ENCODE measurements at regions of chr6 and their contacts with region 1.

Region 1: DNA sequence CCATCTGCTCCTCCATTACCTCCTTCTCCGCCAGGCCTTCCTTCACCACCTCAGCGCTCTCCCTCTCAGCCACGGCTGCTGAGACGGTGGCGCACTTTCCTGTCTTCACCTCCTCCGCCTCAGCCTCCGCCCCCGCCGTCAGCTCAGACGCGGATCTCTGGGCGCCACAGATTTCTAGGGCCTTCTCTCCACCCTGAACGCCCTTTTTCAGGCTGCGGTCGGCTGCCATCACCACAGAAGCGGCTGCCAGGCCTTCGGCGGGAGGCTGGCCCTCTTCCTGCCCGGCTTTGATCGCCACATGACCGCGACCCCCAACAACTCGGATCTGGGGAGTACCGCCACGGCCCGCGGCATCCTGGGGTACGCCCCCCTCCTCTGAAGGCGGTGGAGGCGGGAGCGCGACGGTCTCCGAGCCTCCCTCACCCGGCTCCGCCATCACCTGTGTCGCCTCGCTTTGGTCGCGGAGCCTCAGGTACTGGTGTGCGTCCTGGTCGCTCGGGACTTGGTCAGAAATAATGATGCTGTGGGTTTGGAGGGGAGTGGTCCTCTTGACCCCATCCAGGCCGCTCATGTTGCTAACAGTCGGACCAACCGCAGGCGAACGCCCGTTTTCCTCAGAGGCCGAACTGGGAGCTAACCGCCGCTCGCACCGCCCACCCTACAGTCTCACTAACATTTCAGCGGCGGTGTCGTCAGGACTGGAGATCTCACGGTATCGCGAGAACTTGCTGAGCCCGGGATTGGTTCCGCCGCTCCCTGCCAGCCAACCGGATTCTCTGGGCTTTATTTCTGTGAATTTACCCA is at the start of gene TSPYL1:
- DNase-seq: peak; percentile 97
- H3K4me3 ChIP-seq: peak within 1 kb of the TSS; percentile 88
- H3K27ac ChIP-seq: peak within 1 kb of the TSS; percentile 99
- H3K4me1 ChIP-seq: peaks cover 7% of the 10 kb centered on the region
- H3K27me3 ChIP-seq: no peaks in the 10 kb centered on the region
- CTCF ChIP-seq: no peak
- total RNA-seq, gene TSPYL1: 82.9 to 94.3 TPM

Region 2: DNA sequence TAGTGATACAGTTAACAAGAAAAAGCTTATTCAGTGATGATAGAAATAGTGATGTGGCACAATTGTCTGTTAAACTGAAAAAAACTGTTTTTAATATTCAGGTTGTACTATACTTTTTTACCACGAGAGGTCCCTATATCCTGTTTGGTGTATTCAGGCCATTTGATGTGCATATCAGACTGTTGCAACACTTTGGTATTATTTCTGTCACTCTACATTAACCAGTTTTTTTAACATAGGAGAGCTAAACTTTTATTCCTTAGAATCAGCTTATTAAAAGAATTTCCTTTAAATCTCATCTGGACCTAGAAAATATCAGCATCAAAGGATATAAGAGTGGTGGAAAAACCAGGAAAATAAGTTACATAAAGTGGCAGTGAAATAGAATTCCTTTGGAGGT is 62.4 kb before region 1 on chr6:
- intact Hi-C with region 1: no loop called
- DNase-seq: no peak
- H3K4me3 ChIP-seq: no peak overlapping the region
- H3K27ac ChIP-seq: no peak overlapping the region
- H3K4me1 ChIP-seq: no peaks in the 10 kb centered on the region
- H3K27me3 ChIP-seq: no peaks in the 10 kb centered on the region
- CTCF ChIP-seq: peak; percentile 34

Region 3: GRCh38 chr6:116371120-116371917 is 91.9 kb after region 1 on chr6:
- intact Hi-C with region 1: loop called (anchors 10 kb)
- DNase-seq: peak; percentile 58
- H3K4me3 ChIP-seq: peak overlapping the region; percentile 58
- H3K27ac ChIP-seq: peak overlapping the region; percentile 81
- H3K4me1 ChIP-seq: no peaks in the 10 kb centered on the region
- H3K27me3 ChIP-seq: peaks cover 17% of the 10 kb centered on the region
- CTCF ChIP-seq: no peak

Region 4: GRCh38 chr6:116570856-116571682 is 291.6 kb after region 1 on chr6 and contains the start of gene RWDD1:
- intact Hi-C with region 1: loop called (anchors 5 kb)
- DNase-seq: peak; percentile 98
- H3K4me3 ChIP-seq: peak within 1 kb of the TSS; percentile 87
- H3K27ac ChIP-seq: peak within 1 kb of the TSS; percentile 89
- H3K4me1 ChIP-seq: peaks cover 15% of the 10 kb centered on the region
- H3K27me3 ChIP-seq: no peaks in the 10 kb centered on the region
- CTCF ChIP-seq: no peak
- total RNA-seq, gene RWDD1: 27.4 to 30.8 TPM

Measured in colonic mucosa (tissue), 4 donors.